PC-9 (cell line): ENCODE measurements at regions of chr7 and their contacts with region 1.

Region 1: DNA sequence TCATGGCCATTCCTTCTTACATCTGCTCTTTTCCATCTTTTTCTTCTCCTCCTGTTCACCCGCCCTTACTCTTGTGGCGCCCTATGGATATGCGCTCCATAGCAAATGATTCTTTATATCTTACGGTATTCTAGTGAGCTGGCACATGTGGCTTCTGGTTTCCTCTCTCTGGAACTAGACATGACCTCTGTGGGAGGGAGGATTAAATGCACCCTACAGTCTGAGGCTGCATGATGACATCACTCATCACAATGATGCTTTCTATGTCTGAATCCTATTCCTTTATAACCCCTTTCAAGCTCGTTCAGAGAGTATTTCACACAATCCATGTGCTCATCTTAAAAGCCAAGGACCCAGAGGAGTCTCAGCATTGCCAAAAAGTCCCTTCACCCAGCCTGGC is 153.3 kb downstream of the EGFR start:
- DNase-seq: no peak
- H3K4me3 ChIP-seq: no peak overlapping the region
- H3K27ac ChIP-seq: no peak overlapping the region
- H3K4me1 ChIP-seq: no peaks in the 10 kb centered on the region
- H3K27me3 ChIP-seq: no peaks in the 10 kb centered on the region
- CTCF ChIP-seq: no peak

Region 2: GRCh38 chr7:55101359-55101758 is 70.8 kb before region 1 on chr7:
- CTCF ChIA-PET with region 1: no interaction called
- POLR2A ChIA-PET with region 1: interaction called, 10 read pairs
- intact Hi-C with region 1: no loop called
- DNase-seq: no peak
- H3K4me3 ChIP-seq: no peak overlapping the region
- H3K27ac ChIP-seq: no peak overlapping the region
- H3K4me1 ChIP-seq: peaks cover 7% of the 10 kb centered on the region
- H3K27me3 ChIP-seq: no peaks in the 10 kb centered on the region
- CTCF ChIP-seq: no peak